Mammary epithelial cell (primary cell): ENCODE measurements at regions of chr15 and their contacts with region 1.

Region 1: GRCh38 chr15:33194704-33195670 is at the start of gene FMN1:
- DNase-seq: peak; percentile 91
- H3K4me3 ChIP-seq: peak within 1 kb of the TSS; percentile 35 to 55 (median 53)
- H3K27ac ChIP-seq: peak within 1 kb of the TSS; percentile 80
- H3K4me1 ChIP-seq: peaks cover 7% of the 10 kb centered on the region
- H3K27me3 ChIP-seq: no peaks in the 10 kb centered on the region
- CTCF ChIP-seq: no peak
- total RNA-seq, gene FMN1: 4.2 to 6.7 TPM

Region 2: DNA sequence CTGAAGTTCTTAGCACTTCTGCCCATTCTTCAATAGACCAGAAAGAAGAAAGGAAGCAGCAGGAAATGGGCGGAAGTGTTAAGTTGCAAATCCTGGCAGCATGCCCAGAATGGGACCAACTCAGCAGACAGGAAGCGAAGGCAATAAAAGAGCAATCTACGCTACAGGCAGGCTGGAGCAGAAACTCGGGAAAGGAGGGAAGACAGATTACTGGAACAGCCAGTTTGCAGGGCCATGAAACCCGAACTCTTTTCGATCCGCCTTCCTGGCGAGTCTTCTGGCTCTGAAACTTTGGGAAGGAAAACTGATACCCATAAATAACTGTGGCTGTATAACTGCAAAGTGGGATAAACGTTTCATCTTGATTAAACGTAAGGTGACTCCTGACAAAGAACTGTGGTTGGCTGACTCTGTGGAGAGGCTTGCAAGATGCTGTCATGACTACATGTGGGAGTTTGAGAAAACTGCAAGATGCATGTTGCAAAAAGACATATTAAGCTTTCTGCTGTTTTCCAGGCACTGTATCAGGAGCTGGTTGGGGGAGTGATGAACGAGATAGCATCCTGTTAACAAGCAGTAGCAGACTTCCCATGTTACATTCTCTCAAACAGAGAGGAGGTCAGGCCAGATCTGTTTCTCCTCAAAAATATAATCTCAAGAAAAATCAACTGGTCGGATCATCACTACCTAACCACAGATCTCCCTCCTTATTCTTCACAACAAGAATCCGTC is 68.3 kb before region 1 on chr15:
- CTCF ChIA-PET with region 1: no interaction called
- dilution Hi-C with region 1: no loop called
- in situ Hi-C with region 1: no loop called
- intact Hi-C with region 1: no loop called
- DNase-seq: peak; percentile 83
- H3K4me3 ChIP-seq: no peak overlapping the region
- H3K27ac ChIP-seq: peak overlapping the region; percentile 32
- H3K4me1 ChIP-seq: peaks cover 18% of the 10 kb centered on the region
- H3K27me3 ChIP-seq: no peaks in the 10 kb centered on the region
- CTCF ChIP-seq: no peak

Region 3: DNA sequence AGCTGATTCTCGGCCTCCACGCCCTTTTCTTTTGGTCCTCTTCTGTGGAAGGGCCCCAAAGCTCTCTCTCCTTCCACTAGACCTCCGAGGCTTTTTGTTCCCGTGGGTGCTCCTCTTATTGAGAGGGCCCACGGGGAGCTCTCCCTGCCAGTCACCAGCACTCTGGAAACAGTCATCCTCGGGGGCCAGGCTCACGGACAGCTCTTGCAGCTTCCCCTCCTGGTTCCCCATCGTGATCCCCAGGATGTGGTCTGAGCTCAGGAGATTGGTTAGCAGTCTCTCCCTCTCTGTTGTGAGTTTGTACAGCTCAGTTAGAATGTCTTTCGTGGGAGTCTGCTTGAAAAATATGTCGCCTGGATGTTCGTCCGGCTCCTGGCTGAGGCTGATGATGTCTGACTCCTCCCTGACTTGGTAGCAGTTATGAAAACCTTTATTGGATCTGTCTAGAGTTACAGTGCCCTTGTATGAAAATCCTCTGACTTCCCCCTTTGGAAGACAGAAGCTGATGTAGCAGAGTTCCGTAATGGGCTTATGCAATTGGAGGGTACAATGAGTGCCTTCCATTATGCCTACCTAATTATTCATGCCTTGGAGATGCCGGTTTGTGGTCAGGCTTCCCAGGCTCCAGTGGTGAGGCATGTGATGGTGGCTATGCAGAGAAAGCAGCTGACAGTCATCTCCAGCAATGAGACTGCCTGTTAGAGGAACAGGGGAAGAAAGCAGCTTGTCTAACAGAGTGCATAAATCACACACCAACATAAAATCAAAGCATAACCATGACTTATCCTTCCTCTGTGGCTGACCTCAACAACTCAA is 40.4 kb before region 1 on chr15:
- CTCF ChIA-PET with region 1: interaction called, 5 read pairs
- dilution Hi-C with region 1: no loop called
- in situ Hi-C with region 1: no loop called
- intact Hi-C with region 1: loop called (anchors 5 kb)
- DNase-seq: peak; percentile 98
- H3K4me3 ChIP-seq: no peak overlapping the region
- H3K27ac ChIP-seq: peak overlapping the region; percentile 27
- H3K4me1 ChIP-seq: peaks cover 35% of the 10 kb centered on the region
- H3K27me3 ChIP-seq: no peaks in the 10 kb centered on the region
- CTCF ChIP-seq: no peak

Region 4: DNA sequence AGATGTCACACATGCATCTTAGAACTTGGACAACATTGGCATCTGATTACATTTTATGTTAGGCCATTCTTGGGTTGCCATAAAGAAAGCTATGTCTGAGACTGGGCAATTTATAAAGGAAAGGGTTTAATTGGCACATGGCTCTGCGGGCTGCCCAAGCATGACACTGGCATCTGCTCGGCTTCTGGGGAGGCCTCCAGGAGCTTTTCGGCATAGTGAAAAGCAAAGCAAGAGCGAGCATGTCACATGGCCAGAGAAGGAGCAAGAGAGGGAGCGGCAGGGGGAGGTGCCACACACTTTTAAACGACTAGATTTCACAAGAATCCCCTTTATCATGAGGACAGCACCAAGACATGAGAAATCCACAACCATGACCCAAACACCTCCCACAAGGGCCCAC is 127.1 kb after region 1 on chr15:
- CTCF ChIA-PET with region 1: no interaction called
- dilution Hi-C with region 1: no loop called
- in situ Hi-C with region 1: no loop called
- intact Hi-C with region 1: no loop called
- DNase-seq: no peak
- H3K4me3 ChIP-seq: no peak overlapping the region
- H3K27ac ChIP-seq: no peak overlapping the region
- H3K4me1 ChIP-seq: no peaks in the 10 kb centered on the region
- H3K27me3 ChIP-seq: peaks cover under 1% of the 10 kb centered on the region
- CTCF ChIP-seq: no peak

Region 5: GRCh38 chr15:33846867-33847266 is 651.9 kb after region 1 on chr15:
- CTCF ChIA-PET with region 1: no interaction called
- dilution Hi-C with region 1: loop called (anchors 10 kb)
- in situ Hi-C with region 1: no loop called
- intact Hi-C with region 1: no loop called
- DNase-seq: no peak
- H3K4me3 ChIP-seq: no peak overlapping the region
- H3K27ac ChIP-seq: no peak overlapping the region
- H3K4me1 ChIP-seq: no peaks in the 10 kb centered on the region
- H3K27me3 ChIP-seq: no peaks in the 10 kb centered on the region
- CTCF ChIP-seq: no peak